AG04449 (cell line): ENCODE measurements at regions of chr17 and their contacts with region 1.

Region 1: GRCh38 chr17:17919169-17920107 is 52.8 kb downstream of the TOM1L2 start:
- DNase-seq: no peak
- H3K4me3 ChIP-seq: no peak overlapping the region
- CTCF ChIP-seq: peak; percentile 79

Region 2: GRCh38 chr17:17812211-17813057 is 107.0 kb before region 1 on chr17:
- CTCF ChIA-PET with region 1: interaction called, 22 read pairs
- POLR2A ChIA-PET with region 1: no interaction called
- DNase-seq: no peak
- H3K4me3 ChIP-seq: no peak overlapping the region
- CTCF ChIP-seq: peak; percentile 90

Region 3: DNA sequence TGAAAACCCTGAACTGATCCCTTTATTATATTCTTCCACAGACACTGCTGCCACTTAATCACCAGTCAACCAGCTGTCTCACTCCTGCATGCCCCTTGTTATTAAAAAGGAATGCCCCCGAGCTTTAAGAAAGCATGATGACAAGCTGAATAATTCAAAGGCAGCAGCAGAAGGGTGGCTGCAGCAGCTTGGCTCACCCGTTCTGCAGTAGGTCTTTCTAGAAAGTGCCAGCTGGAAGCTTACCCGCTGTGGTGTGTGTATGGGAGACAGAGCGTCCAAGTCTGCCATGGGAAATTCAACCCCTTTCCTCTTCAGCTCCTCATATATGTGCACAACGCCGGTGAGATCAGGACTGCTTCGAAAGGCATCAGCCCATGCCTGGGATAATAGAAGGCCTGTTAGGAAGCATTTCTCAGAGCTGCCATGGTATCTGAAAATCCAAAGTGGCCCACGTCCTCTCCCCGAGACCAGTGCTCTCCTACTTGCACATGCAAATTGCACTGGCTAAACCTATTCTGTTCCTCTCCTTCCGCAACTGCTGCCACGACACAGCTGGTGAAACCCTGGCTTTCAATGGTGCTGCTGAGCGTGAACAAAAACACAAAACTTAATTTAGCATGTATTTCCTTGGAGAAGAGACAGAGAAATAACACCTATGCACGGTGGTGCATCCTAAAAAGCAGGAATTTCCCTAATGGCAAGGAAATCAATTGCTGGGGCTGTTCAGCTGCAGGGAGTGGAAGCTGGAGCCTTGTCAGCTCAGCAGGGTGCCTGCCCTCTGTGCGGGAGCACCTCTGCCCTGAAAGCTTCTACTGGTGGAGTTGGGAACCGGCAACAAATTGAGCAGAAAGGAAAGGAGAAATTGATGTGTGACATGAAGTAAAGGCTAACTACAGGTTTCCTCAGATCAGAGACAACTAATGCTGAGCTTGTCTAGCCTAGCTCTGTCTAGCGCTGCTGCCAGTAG is 34.8 kb before region 1 on chr17:
- CTCF ChIA-PET with region 1: interaction called, 82 read pairs
- POLR2A ChIA-PET with region 1: no interaction called
- DNase-seq: no peak
- H3K4me3 ChIP-seq: no peak overlapping the region
- CTCF ChIP-seq: no peak

Region 4: DNA sequence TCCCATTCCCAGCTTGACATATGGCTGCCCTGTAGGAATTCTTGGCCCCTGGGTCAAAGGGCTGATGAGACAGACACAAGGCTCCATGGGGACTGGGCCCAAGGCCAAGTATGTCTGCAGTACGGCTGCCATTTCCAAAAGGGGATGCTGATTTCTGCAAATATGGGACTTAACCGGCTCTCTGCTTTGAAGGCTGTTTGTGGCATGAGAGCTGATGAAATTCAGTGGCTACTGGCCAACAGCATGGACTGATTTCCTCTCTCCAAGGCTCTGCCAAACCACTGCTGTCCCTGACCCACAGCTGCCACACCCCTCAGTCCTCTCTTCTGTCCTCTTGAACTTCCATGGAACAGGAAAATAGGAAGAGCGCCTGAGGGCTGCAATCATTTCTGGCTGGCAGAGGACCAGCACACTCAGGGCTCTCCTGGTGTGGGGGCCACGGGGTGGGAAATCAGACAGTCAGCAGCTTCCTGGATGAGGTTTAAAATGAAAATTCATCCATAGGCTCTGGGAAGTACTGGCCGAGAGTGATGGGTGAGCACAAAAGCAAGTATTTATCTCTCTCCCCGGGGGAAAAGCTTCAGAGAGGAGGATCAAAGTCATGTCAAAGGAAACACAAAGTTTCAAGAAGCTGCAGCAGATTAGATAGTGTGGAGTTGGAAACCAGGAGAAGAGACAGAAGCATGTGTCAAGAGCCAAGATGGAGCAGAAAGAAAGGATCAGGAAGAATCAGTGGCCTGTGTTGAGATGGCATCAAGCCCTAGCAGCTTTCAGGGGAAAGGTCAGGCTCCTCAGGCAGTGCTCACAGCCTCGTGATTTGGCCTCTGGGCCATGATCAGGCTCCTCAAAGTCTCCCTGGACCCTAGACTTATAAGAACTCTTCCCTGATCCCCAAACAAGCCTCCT is 18.6 kb before region 1 on chr17:
- CTCF ChIA-PET with region 1: interaction called, 82 read pairs
- POLR2A ChIA-PET with region 1: interaction called, 9 read pairs
- DNase-seq: peak; percentile 80
- H3K4me3 ChIP-seq: no peak overlapping the region
- CTCF ChIP-seq: no peak

Region 5: GRCh38 chr17:17935321-17936271 is 16.2 kb after region 1 on chr17:
- CTCF ChIA-PET with region 1: interaction called, 69 read pairs
- POLR2A ChIA-PET with region 1: interaction called, 5 read pairs
- DNase-seq: peak; percentile 90
- H3K4me3 ChIP-seq: no peak overlapping the region
- CTCF ChIP-seq: no peak

Region 6: GRCh38 chr17:18093616-18094408 is 174.4 kb after region 1 on chr17:
- CTCF ChIA-PET with region 1: no interaction called
- POLR2A ChIA-PET with region 1: no interaction called
- DNase-seq: no peak
- H3K4me3 ChIP-seq: no peak overlapping the region
- CTCF ChIP-seq: peak; percentile 36